Activated CD4-positive, alpha-beta T cell treated with anti-CD3 and anti-CD28 coated beads, Interleukin-2, amount 10 ng/mL, durations not matched to agents 7 days and 5 days (primary cell): ENCODE measurements at regions of chr19 and their contacts with region 1.

Region 1: GRCh38 chr19:4267101-4267900 is 11.8 kb upstream of the SHD start:
- DNase-seq: peak; percentile 74
- H3K4me3 Mint-ChIP-seq: no peak overlapping the region
- H3K27ac Mint-ChIP-seq: no peak overlapping the region
- H3K4me1 Mint-ChIP-seq: peaks cover 35% of the 10 kb centered on the region
- H3K27me3 Mint-ChIP-seq: no peaks in the 10 kb centered on the region

Region 2: GRCh38 chr19:4278419-4279266 is 11.3 kb after region 1 on chr19 and contains the start of gene SHD:
- CTCF ChIA-PET with region 1: interaction called, 21 read pairs
- POLR2A ChIA-PET with region 1: no interaction called
- DNase-seq: no peak
- H3K4me3 Mint-ChIP-seq: no peak within 1 kb of the TSS
- H3K27ac Mint-ChIP-seq: no peak within 1 kb of the TSS
- H3K4me1 Mint-ChIP-seq: peaks cover 2% of the 10 kb centered on the region
- H3K27me3 Mint-ChIP-seq: peaks cover 27% of the 10 kb centered on the region
- total RNA-seq, gene SHD: not detected

Region 3: DNA sequence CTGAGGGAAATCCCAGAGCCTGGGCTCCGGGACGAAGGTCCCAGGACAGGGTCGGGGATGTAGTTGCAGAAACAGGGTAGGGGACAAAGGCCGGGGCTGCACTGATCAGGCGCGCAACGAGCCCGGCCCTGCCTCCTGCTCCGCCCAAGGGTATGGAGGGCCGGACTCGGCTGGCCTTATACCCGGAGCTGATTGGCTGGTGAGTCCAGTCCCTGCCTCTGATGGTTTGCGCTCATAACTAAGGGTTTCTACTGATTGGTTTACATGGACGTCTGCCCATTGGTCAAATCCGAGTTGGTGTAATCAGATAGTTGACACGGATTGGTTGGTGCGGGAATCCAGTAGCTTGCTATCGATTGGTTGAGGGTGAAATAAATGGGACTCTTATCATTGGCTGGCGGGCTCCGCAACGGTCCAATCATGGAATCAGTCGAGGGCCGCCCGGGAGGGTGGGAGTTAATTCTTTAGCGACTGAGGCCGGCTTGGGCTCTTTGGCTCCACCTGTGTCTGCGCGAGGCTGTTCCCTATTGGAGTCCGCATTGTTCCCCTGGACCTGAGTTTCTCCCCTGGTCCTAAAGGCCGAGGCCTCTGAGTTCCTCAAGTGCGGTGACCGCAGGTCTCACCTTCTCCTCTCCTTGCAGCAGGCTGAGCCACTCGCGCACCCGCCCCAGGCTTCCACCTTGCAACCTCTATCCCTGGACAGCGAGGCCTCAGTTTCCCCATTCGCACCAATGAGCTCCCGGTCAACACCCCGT is 75.5 kb after region 1 on chr19:
- CTCF ChIA-PET with region 1: interaction called, 13 read pairs
- POLR2A ChIA-PET with region 1: interaction called, 3 read pairs
- DNase-seq: peak; percentile 98
- H3K4me3 Mint-ChIP-seq: peak overlapping the region; percentile 91
- H3K27ac Mint-ChIP-seq: peak overlapping the region; percentile 97
- H3K4me1 Mint-ChIP-seq: peaks cover 38% of the 10 kb centered on the region
- H3K27me3 Mint-ChIP-seq: no peaks in the 10 kb centered on the region

Region 4: GRCh38 chr19:4352701-4353121 is 85.4 kb after region 1 on chr19:
- CTCF ChIA-PET with region 1: interaction called, 19 read pairs
- POLR2A ChIA-PET with region 1: interaction called, 3 read pairs
- DNase-seq: peak; percentile 71
- H3K4me3 Mint-ChIP-seq: no peak overlapping the region
- H3K27ac Mint-ChIP-seq: no peak overlapping the region
- H3K4me1 Mint-ChIP-seq: peaks cover 2% of the 10 kb centered on the region
- H3K27me3 Mint-ChIP-seq: no peaks in the 10 kb centered on the region

Region 5: DNA sequence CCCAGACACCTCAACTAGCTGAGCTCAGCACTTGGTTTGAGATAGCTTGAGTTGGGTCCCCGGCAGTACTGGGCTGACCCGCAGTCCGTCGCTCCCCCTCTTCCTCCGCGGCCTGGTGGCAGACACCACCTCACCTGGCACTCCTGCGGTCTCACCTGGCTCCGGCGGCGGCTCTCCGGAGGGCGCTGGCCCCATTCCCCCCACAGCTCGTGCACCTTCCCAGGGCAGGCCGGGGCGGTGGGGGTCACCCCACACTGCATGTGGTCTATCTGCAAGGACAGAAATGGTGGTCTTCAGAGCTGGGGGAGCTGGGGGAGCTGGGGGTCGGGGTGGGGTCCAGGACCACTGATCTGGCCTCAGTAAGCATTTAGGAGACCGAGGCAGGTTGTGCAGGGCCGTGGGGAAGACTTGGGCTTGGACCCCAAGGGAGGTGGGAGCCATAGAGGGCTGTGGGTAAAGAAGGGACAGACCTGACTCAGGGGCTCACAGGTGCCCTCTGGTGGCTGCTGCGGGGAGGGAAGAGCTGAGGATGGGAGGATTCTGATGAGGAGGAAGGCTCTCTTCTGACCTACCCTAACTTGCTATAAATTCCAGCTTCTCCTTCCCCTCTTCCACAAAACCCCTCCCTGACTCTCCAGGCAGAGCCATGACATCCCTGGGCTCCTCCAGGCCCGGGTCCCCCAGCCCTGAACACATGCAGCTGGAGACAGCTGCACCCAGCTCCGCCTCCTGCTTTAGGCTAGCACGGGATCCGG is 257.7 kb after region 1 on chr19:
- CTCF ChIA-PET with region 1: interaction called, 18 read pairs
- POLR2A ChIA-PET with region 1: no interaction called
- DNase-seq: peak; percentile 75
- H3K4me3 Mint-ChIP-seq: no peak overlapping the region
- H3K27ac Mint-ChIP-seq: no peak overlapping the region
- H3K4me1 Mint-ChIP-seq: no peaks in the 10 kb centered on the region
- H3K27me3 Mint-ChIP-seq: no peaks in the 10 kb centered on the region